Esophagus muscularis mucosa (tissue), 4 donors: ENCODE measurements at regions of chr17 and their contacts with region 1.

Region 1: DNA sequence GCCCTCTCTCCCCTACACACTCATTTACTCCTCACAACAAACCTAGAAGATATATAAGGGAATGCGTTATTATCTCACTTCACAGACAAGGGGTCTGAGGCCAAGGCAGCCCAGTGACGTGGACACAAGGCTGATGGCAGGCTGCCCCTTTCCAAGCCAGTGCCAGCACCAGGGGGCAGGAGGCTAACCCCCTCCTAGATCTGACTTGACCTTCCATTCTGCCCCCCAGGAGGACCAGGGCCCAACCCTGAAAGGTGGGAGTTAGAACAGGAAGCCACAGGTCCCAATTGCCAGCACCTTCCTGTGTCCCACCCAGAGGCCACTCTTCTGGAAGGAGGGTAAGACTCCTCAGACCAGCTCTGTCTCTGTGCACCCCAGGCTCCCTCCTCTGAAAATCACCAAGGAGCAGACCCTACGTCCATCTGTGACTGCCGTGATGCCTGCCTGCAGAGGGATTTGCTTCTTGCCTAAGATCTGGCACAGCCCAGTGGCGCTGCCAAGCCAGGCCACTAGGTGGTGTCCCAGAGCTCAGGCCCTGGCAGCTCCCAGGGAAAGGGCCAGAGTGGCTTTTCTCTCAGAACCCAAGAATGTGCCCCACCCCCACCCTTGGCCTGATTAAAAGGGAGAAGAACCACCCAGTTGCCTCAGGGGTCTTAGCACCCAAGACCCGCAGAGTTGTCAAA is 42.4 kb upstream of the MRPS23 start:
- DNase-seq: peak; percentile 98
- H3K4me3 ChIP-seq: peak overlapping the region in 2 of 4 donors; percentile 30 to 35
- H3K27ac ChIP-seq: peak overlapping the region; percentile 88 to 100 (median 96)
- H3K4me1 ChIP-seq: peaks cover 85 to 100% (median 96%) of the 10 kb centered on the region in 4 donors
- H3K27me3 ChIP-seq: no peaks in the 10 kb centered on the region
- CTCF ChIP-seq: peak; percentile 93 to 100 (median 96)
- EP300 ChIP-seq: no peak
- POLR2A ChIP-seq: no peak

Region 2: GRCh38 chr17:57954395-57955182 is 62.3 kb after region 1 on chr17:
- intact Hi-C with region 1: loop called (anchors 5 kb)
- DNase-seq: peak; percentile 45
- H3K4me3 ChIP-seq: peak overlapping the region; percentile 84 to 98 (median 94)
- H3K27ac ChIP-seq: peak overlapping the region; percentile 98 to 100 (median 100)
- H3K4me1 ChIP-seq: peaks cover 56 to 69% (median 61%) of the 10 kb centered on the region in 4 donors
- H3K27me3 ChIP-seq: no peaks in the 10 kb centered on the region
- CTCF ChIP-seq: no peak
- EP300 ChIP-seq: no peak
- POLR2A ChIP-seq: peak; percentile 50